HEK293T (cell line): ENCODE measurements at regions of chr2 and their contacts with region 1.

Region 1: DNA sequence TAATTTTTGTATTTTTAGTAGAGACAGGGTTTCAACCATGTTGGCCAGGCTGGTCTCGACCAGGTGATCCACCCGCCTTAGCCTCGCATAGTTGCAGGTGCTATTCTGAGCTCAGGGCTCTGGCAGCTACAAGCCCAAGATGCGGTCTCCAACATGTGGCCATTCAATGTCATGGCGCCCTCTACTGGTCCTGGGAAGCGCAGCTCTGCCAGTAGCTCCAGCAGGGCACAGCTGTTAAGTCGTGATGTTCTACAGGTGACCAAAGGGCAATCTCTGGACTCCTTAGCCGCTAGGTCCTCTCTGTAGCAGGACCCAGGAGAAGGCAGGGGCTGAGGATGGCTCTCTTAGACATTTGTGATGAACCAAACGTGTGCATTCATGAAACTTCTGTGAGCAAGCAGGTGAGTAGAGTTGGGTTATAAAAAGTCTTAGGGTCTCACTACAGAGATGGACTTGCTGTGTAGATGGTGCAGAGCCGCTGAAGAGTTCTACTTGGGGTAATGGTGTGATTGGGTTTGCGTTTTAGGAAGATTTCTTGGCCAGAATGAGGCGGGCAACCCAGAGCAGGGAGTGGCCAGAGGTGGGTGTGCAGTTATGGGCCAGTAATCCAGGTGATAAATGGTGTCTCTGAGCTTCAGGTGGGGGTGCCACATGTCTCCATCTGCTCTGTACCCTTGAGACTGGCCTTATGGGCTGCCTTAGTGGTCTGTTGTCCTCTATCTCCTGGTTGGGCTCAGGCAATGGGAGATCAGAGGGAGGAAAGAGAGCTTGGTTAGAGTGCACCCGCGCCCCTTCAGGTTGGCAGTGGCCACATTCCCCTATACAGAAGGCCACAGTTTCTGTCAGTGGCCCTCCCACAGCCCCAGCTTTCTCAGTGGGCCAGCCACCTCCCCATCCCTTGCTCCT is 31.0 kb downstream of the IL37 start:
- DNase-seq: peak; percentile 81

Region 2: DNA sequence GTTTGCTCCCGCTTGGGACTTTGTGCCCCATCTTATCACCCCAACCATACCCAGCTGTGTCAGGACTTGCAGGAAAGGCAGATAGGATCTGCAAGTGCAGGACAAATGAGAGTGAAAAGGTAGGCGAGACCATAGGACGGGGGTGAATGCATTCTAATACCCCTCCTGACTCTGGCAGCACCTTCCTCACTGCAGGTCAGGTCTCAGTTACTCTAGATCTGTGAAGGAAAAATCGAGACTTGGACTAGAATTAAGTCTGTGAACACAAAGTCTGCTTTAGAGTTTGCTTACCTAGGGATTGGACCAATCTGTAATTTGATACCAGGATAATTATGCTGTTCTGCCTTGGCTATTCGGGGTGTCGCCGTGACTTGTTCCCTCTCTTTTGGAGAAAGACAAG is 201.5 kb before region 1 on chr2:
- CTCF ChIA-PET with region 1: interaction called, 10 read pairs
- POLR2A ChIA-PET with region 1: no interaction called
- DNase-seq: no peak

Region 3: GRCh38 chr2:112749755-112750559 is 192.0 kb before region 1 on chr2:
- CTCF ChIA-PET with region 1: interaction called, 37 read pairs
- POLR2A ChIA-PET with region 1: no interaction called
- DNase-seq: peak; percentile 76

Region 4: DNA sequence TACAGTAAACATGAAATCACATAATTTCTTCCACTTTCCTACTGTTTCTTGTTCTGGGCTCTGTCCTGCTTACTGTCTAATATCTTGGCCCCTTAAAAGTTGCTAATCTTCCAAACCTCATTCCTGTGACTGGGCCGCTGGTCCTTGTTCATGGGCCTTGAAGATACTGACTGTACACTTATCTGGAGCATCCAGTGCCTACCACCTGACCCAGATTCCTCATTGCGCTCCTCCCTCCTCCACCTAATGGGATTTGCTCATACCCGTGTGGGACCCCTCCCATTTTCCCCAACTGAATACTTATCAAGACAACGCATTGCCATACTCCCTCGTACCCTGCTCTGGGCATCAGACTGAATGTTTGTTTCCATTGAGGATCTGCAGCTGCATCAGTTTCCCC is 37.1 kb before region 1 on chr2:
- CTCF ChIA-PET with region 1: interaction called, 15 read pairs
- POLR2A ChIA-PET with region 1: no interaction called
- DNase-seq: no peak

Region 5: DNA sequence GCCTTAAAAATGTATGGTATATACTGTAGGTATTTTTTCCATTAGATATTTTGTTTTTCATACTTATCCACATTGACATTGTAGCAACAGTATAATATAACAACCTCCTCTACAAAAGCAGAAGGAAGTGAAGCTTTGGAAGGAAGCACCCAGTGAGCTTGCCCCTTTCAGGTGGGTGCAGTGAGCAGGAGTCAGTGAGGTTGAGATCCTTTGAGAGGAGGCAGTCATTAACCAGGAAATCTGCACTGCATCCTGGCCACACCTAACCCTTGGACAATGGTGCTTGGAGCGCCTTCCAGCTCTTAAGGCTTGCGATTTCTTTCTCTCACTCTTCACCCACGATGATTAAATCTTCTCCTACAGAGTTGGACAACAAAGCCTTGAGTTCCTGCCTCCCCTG is 17.2 kb before region 1 on chr2:
- CTCF ChIA-PET with region 1: interaction called, 13 read pairs
- POLR2A ChIA-PET with region 1: no interaction called
- DNase-seq: no peak

Region 6: GRCh38 chr2:112958428-112959108 is 16.6 kb after region 1 on chr2:
- CTCF ChIA-PET with region 1: interaction called, 22 read pairs
- POLR2A ChIA-PET with region 1: interaction called, 3 read pairs
- DNase-seq: peak; percentile 62